Activated naive CD4-positive, alpha-beta T cell treated with anti-CD3 and anti-CD28 coated beads, Interleukin-2, amount 10 ng/mL, durations not matched to agents 7 days and 5 days (primary cell): ENCODE measurements at regions of chr1 and their contacts with region 1.

Region 1: DNA sequence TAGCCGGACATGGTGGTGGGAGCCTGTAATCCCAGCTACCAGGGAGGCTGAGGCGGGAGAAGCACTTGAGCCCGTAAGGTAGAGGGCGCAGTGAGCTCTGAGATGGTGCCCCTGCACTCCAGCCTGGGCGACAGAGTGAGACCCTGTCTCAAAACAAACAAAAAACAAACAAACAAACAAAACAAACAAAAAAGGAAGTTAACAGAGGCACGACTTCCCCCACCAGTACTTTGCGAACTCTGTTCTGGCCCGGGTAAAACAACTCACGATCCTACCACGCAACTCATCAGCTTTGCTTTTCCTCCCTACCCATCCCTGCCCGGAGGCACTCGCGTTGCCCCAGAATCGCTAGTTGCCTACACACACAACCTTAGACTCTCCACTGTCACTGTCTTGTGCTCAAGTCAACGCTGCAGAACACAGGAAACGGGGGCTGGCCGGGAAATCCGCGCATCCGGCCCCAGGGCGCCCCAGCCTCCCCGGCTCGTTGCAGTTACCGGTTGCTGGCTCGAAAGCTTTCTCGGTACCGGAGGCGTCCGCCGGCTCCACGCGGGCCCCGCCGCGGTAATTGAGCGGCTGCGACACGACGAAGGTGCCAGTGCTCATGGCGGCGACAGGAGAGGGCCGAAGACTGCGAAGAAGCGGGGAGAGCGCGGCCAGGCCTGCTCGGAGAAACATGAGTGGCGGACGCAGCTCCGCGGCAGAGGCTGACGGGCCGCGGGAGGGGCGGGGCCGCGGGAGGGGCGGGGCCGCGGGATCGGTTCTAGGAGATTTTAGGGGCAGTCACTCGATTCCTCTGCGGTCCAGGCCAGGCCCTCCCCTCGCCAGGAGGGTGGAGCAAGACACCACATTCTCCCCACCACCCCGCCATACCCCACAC is at the start of gene ALDH9A1:
- DNase-seq: peak; percentile 91
- H3K4me3 Mint-ChIP-seq: peak within 1 kb of the TSS; percentile 86
- H3K27ac Mint-ChIP-seq: peak within 1 kb of the TSS; percentile 94
- H3K4me1 Mint-ChIP-seq: peaks cover 38% of the 10 kb centered on the region
- H3K27me3 Mint-ChIP-seq: peaks cover 6% of the 10 kb centered on the region

Region 2: DNA sequence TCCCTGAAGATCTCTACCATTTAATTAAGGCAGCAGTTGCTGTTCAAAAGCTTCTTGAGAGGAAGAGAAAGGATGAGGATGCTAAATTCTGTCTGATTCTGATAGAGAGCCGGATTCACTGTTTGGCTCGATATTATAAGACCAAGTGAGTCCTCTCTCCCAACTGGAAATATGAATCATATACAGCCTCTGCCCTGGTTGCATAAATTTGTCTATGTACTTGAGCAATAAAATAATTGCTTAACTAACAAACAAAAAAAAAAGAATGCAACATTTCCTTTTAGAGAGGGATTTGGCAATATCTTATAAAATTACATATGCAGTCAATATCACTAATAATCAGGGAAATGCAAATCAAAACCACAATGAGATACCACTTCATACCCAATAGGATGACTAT is 26.6 kb before region 1 on chr1:
- CTCF ChIA-PET with region 1: no interaction called
- DNase-seq: no peak
- H3K4me3 Mint-ChIP-seq: no peak overlapping the region
- H3K27ac Mint-ChIP-seq: no peak overlapping the region
- H3K4me1 Mint-ChIP-seq: peaks cover 2% of the 10 kb centered on the region
- H3K27me3 Mint-ChIP-seq: no peaks in the 10 kb centered on the region

Region 3: GRCh38 chr1:165686121-165686970 is 11.8 kb before region 1 on chr1:
- CTCF ChIA-PET with region 1: interaction called, 13 read pairs
- DNase-seq: no peak
- H3K4me3 Mint-ChIP-seq: no peak overlapping the region
- H3K27ac Mint-ChIP-seq: peak overlapping the region; percentile 12
- H3K4me1 Mint-ChIP-seq: peaks cover 22% of the 10 kb centered on the region
- H3K27me3 Mint-ChIP-seq: no peaks in the 10 kb centered on the region